ENCODE measurements at regions of chr22 and their contacts with region 1.

Region 1: GRCh38 chr22:37498289-37498909 is 12.2 kb upstream of the MFNG start:
- DNase-seq: peak; percentile 78
- ATAC-seq: peak; percentile 97
- H3K4me3 ChIP-seq: no peak overlapping the region
- H3K4me3 Mint-ChIP-seq: no peak overlapping the region
- H3K27ac ChIP-seq: no peak overlapping the region
- H3K27ac Mint-ChIP-seq: no peak overlapping the region
- H3K4me1 ChIP-seq: peaks cover 0 to 7% of the 10 kb centered on the region in 2 donors
- H3K4me1 Mint-ChIP-seq: no peaks in the 10 kb centered on the region
- H3K27me3 ChIP-seq: peaks cover 0 to 29% (median 1%) of the 10 kb centered on the region in 4 experiments
- H3K27me3 Mint-ChIP-seq: peaks cover 20% of the 10 kb centered on the region
- CTCF ChIP-seq: peak; percentile 76

Region 2: DNA sequence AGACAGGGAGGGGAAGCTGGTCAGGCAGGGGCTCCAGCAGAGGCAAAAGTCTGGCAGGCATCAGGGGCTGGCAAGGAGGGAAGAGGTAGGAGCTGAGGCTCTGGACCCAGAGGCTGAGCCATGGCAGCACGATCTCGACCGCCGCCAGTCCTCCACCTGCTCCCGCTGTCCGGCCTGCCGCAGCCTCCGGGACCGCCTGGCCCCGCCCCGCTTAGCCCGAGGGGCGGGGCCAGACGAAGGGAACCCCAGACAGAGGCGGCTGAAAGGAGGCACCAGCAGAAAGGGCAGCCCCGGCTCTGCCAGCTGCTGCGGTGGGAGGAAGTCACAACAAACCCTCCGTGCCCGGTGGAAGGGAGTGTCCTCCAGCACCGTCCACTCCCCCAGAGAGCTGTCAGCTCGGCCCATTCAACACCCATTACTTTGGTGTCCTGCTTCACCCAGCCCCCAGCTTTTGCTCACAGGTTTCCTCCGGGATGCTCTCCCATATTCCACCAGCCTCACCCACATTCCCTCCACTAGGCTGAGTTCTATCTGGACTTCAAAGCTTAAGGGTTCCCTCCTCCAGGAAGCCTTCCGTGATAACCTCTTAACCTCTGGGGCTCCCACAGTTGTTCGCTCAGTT is 12.1 kb before region 1 on chr22 and contains the start of gene MFNG:
- CTCF ChIA-PET with region 1: interaction called, 17 read pairs
- POLR2A ChIA-PET with region 1: no interaction called
- intact Hi-C with region 1: loop called (anchors 1 kb)
- DNase-seq: peak; percentile 86
- ATAC-seq: peak; percentile 78
- H3K4me3 ChIP-seq: peak within 1 kb of the TSS; percentile 63 to 91 (median 80)
- H3K4me3 Mint-ChIP-seq: peak within 1 kb of the TSS; percentile 98
- H3K27ac ChIP-seq: peak within 1 kb of the TSS; percentile 70 to 93
- H3K27ac Mint-ChIP-seq: peak within 1 kb of the TSS; percentile 98
- H3K4me1 ChIP-seq: peaks cover 24 to 47% of the 10 kb centered on the region in 2 donors
- H3K4me1 Mint-ChIP-seq: peaks cover 55% of the 10 kb centered on the region
- H3K27me3 ChIP-seq: no peaks in the 10 kb centered on the region
- H3K27me3 Mint-ChIP-seq: no peaks in the 10 kb centered on the region
- CTCF ChIP-seq: no peak
- total RNA-seq, gene MFNG: 95.9 and 109 TPM in 2 replicates

Region 3: DNA sequence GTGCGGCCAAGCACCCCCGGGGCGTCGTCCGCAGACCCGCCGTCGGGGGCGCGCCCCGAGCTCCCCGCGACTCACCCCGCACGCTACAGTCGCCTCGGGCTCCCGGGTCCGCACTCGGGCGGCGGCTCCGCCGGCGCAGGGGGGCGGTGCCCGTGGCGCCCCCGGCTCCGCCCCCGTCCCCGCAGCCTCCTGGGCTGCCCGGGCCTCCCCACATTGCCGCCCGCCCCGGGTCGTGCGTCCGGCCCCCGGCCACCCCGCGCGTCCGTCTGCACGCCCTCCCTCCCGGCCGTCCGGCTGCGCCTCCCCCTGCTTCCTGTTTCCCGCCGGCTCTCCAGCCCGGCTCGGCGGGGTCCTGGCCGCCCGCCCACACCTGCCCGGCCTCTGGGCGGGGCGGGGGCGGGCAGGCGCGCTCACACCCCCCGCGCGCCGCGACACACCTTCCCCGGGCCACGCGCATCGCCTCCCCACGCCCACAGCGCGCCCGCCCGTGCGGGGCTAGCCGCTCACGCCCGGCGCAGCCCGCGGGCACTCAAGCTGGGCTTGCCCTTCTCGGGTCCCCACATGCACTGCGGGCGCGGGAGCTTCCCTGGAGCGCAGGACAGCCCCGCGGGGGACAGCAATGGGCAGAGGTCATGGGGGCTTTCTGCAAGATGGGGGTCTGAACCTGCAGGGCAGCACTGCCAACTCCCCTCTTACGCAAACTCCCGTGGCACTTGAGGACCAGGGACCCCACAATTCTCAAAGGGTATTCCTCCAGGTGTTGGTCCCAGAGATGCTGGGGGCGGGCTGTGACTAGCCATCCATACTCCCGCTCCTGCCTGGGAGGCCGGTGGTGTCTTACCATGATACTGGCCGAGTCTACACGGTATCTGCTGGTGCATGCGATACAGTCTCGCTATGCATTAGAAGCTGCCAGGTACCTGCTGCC is 21.1 kb after region 1 on chr22 and contains the start of gene CARD10:
- CTCF ChIA-PET with region 1: no interaction called
- POLR2A ChIA-PET with region 1: no interaction called
- intact Hi-C with region 1: no loop called
- DNase-seq: peak; percentile 43
- ATAC-seq: peak; percentile 36
- H3K4me3 ChIP-seq: peak within 1 kb of the TSS in 3 of 5 experiments; percentile 41 to 49 (median 44)
- H3K4me3 Mint-ChIP-seq: peak within 1 kb of the TSS; percentile 74
- H3K27ac ChIP-seq: no peak within 1 kb of the TSS
- H3K27ac Mint-ChIP-seq: no peak within 1 kb of the TSS
- H3K4me1 ChIP-seq: peaks cover 5 to 10% of the 10 kb centered on the region in 2 donors
- H3K4me1 Mint-ChIP-seq: peaks cover 6% of the 10 kb centered on the region
- H3K27me3 ChIP-seq: peaks cover 0 to 49% (median 12%) of the 10 kb centered on the region in 4 experiments
- H3K27me3 Mint-ChIP-seq: peaks cover 55% of the 10 kb centered on the region
- CTCF ChIP-seq: no peak
- total RNA-seq, gene CARD10: not detected in 2 replicates